Activated CD8-positive, alpha-beta T cell treated with anti-CD3 and anti-CD28 coated beads for 36 hours (primary cell): ENCODE measurements at regions of chr19 and their contacts with region 1.

Region 1: DNA sequence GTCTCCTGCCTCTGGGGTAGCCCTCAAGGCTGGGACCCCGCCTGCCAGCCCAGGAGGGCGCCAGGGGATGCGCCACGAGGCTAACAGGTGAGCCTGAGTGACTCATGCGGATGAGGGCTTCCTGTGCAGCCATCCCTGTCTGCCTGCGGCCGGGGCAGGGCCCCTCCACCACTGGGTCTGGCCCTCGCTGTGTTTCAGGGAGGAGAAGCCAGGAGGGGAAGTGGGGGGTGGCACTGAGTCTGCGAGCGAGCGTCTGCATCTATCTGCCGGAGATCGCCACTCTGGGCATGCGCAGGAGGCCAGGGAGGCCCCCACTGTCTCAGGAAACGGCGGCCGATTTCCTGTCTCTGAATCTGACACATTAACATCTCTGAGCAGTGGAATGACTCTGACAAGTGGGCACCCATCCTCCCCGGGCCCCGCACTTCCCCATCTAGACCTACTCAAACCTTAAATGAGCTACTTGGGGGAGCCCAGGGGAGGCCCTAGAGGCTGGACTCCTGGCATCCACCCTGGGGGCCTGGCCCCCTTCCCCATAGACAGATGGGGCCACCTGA is 19.7 kb downstream of the RFX1 start:
- DNase-seq: peak; percentile 100
- ATAC-seq: peak; percentile 93
- H3K4me3 Mint-ChIP-seq: peak overlapping the region; percentile 67
- H3K27ac Mint-ChIP-seq: peak overlapping the region; percentile 98
- H3K4me1 Mint-ChIP-seq: peaks cover 65% of the 10 kb centered on the region
- H3K27me3 Mint-ChIP-seq: no peaks in the 10 kb centered on the region
- CTCF ChIP-seq: no peak

Region 2: GRCh38 chr19:14006243-14006765 is 19.9 kb after region 1 on chr19 and contains the start of gene RFX1:
- CTCF ChIA-PET with region 1: interaction called, 11 read pairs
- POLR2A ChIA-PET with region 1: interaction called, 96 read pairs
- intact Hi-C with region 1: no loop called
- DNase-seq: peak; percentile 100
- ATAC-seq: peak; percentile 80
- H3K4me3 Mint-ChIP-seq: peak within 1 kb of the TSS; percentile 88
- H3K27ac Mint-ChIP-seq: peak within 1 kb of the TSS; percentile 98
- H3K4me1 Mint-ChIP-seq: peaks cover 37% of the 10 kb centered on the region
- H3K27me3 Mint-ChIP-seq: no peaks in the 10 kb centered on the region
- CTCF ChIP-seq: no peak
- total RNA-seq, gene RFX1: 13.3 to 14.1 TPM